Activated CD4-positive, alpha-beta T cell treated with anti-CD3 and anti-CD28 coated beads for 36 hours (primary cell): ENCODE measurements at regions of chr7 and their contacts with region 1.

Region 1: DNA sequence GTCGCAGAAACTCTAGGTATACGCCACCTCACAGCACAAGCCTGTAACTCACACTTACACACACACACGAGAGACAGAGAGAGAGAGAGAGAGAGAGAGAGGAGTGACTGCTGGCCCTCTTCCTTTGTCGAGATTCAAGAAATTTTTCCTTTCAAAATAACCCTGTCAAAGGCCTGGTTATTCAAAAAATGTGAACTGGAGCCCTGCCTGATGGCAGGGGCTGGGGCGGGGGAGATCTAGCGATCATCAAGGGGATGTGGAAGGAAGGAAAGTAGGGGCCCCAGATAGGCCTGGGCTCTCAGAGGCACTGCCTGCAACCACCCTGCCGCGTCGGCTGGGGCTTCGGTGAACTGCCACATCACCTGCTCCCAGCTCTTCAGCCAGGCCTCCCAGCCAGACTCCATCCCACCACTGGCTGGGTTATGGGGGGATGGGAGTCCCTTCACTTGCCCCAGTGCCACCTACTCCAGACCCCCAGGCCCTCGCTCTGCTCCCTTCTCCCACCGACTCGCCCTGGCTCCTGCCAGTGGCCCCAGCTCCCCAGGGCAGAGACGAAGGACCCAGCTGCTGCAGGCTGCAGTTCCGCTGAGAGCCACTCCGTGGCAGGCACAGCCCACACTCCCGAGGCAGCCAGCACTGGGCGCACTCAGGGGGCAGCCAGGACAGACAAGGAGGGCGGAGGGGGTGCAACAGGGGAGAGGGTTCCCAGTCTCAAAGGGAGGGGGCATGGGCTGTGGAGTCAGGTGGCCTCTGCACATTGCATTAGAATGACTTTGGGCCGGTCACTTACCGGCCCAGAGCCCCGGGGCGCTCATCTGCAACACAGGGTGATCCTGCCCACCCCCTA is 15.3 kb downstream of the KCNH2 start:
- DNase-seq: peak; percentile 78
- ATAC-seq: peak; percentile 93
- H3K4me3 Mint-ChIP-seq: no peak overlapping the region
- H3K27ac Mint-ChIP-seq: no peak overlapping the region
- H3K4me1 Mint-ChIP-seq: peaks cover 18% of the 10 kb centered on the region
- H3K27me3 Mint-ChIP-seq: peaks cover 21% of the 10 kb centered on the region

Region 2: DNA sequence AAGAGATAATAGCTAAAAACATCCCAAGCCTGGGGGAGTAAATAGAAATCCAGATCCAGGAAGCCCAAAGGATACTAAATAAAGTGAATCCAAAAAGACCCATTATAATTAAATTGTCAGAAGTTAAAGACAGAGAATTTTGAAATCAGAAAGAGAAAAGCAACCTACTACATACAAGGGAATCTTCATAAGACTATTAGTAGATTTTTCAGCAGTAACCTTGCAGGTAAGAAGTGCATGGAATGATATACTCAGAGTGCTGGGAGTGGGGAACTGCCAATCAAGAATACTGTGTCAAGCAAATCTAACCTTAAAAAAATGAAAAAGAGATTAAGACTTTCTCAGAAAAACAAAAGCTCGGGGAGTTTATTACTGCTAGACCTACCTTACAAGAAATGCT is 259.6 kb before region 1 on chr7:
- CTCF ChIA-PET with region 1: no interaction called
- POLR2A ChIA-PET with region 1: no interaction called
- intact Hi-C with region 1: no loop called
- DNase-seq: no peak
- ATAC-seq: no peak
- H3K4me3 Mint-ChIP-seq: no peak overlapping the region
- H3K27ac Mint-ChIP-seq: no peak overlapping the region
- H3K4me1 Mint-ChIP-seq: peaks cover 2% of the 10 kb centered on the region
- H3K27me3 Mint-ChIP-seq: no peaks in the 10 kb centered on the region

Region 3: DNA sequence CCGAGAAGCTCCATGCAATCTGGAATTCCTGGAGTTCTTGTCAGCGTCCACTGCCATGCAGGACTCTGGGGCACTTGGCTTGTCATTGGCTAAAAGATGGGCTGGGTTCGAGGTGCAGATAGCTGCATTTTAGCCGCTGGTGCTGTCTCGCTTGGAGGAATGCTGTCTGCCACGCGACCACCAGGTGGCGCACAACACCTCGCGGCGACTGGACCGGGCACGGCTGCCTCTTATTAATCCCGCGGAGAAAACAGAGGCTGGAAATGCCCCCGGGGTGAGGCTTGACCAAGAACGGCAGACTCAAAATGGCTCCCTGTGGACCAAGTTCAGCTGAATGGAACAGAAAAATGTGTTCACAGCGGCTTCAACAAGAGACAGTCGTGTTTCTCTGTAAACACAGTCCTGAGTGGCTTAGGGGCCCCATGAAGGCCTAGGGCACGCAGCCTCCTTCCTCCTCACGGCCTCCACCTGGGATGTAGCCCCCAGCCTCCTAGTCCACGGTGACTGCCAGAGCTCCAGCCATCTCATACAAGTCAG is 64.2 kb before region 1 on chr7:
- CTCF ChIA-PET with region 1: interaction called, 16 read pairs
- POLR2A ChIA-PET with region 1: no interaction called
- intact Hi-C with region 1: no loop called
- DNase-seq: peak; percentile 89
- ATAC-seq: peak; percentile 86
- H3K4me3 Mint-ChIP-seq: no peak overlapping the region
- H3K27ac Mint-ChIP-seq: peak overlapping the region; percentile 15
- H3K4me1 Mint-ChIP-seq: peaks cover 12% of the 10 kb centered on the region
- H3K27me3 Mint-ChIP-seq: peaks cover 31% of the 10 kb centered on the region

Region 4: GRCh38 chr7:150994141-150994964 is 31.6 kb after region 1 on chr7:
- CTCF ChIA-PET with region 1: interaction called, 17 read pairs
- POLR2A ChIA-PET with region 1: no interaction called
- intact Hi-C with region 1: no loop called
- DNase-seq: peak; percentile 58
- ATAC-seq: peak; percentile 70
- H3K4me3 Mint-ChIP-seq: peak overlapping the region; percentile 49
- H3K27ac Mint-ChIP-seq: no peak overlapping the region
- H3K4me1 Mint-ChIP-seq: peaks cover 40% of the 10 kb centered on the region
- H3K27me3 Mint-ChIP-seq: no peaks in the 10 kb centered on the region

Region 5: DNA sequence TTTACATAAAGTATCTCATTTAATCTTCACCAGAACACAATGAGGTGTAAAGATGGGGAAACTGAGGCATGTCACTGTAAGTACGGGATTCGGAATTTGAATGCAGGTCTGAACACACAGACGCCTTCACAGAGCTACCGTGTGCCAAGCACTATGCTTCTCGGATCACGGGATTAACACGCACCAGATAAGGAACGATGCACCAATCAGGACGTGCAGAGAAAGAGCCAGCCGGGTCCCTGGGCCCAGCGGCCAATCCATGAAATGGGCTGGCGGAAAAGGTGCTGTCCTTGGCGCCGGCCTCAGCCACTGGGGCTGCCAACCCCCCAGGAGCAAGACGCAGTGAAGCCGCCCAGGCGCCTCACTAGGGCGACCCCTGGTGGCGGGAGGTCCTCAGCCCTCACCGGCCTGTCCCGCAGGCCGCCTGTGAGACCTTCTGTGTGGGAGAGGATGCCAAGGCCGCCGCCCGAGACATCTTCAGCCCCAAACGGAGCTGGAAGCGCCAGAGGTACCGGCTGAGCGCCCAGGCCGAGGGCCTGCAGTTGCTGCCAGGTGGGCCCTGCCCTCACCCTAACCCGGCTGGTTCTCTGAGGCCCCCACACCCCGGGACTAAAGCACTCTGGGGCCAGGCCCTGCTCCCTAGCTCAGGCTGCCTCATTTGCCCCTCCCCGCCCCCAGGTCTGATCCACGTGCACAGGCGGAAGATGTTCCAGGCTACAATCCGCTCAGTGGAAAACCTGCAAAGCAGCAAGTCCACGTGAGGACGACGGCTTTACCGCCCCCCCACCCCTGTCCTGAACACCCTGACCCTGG is 45.9 kb after region 1 on chr7:
- CTCF ChIA-PET with region 1: interaction called, 11 read pairs
- POLR2A ChIA-PET with region 1: no interaction called
- intact Hi-C with region 1: no loop called
- DNase-seq: peak; percentile 89
- ATAC-seq: peak; percentile 67
- H3K4me3 Mint-ChIP-seq: peak overlapping the region; percentile 55
- H3K27ac Mint-ChIP-seq: peak overlapping the region; percentile 59
- H3K4me1 Mint-ChIP-seq: peaks cover 53% of the 10 kb centered on the region
- H3K27me3 Mint-ChIP-seq: no peaks in the 10 kb centered on the region

Region 6: DNA sequence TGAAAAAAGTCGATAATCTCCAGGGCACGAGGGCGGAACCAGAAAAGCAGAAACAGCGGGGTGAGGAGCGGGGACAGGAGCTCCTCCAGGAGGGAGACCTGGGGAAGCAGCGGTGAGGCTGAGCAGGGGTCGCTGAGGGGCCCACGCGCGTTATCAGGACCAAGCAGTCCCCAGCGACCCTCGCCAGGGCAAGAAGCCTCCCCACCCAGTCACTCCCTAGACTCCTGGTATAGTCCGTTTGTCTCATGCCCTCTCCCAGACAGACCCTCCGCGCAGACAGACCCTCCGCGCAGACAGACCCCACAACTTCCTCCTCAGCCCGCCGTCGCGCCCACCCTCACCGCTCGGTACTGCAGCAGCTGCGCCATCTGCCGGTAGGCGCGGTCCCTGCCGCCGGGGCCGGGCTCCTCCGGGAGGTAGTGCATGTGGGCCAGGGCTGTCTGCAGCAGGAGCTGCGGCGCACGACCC is 55.2 kb after region 1 on chr7:
- CTCF ChIA-PET with region 1: interaction called, 8 read pairs
- POLR2A ChIA-PET with region 1: no interaction called
- intact Hi-C with region 1: loop called (anchors 1 to 2 kb)
- DNase-seq: peak; percentile 90
- ATAC-seq: peak; percentile 59
- H3K4me3 Mint-ChIP-seq: peak overlapping the region; percentile 66
- H3K27ac Mint-ChIP-seq: peak overlapping the region; percentile 80
- H3K4me1 Mint-ChIP-seq: peaks cover 47% of the 10 kb centered on the region
- H3K27me3 Mint-ChIP-seq: peaks cover 9% of the 10 kb centered on the region

Region 7: DNA sequence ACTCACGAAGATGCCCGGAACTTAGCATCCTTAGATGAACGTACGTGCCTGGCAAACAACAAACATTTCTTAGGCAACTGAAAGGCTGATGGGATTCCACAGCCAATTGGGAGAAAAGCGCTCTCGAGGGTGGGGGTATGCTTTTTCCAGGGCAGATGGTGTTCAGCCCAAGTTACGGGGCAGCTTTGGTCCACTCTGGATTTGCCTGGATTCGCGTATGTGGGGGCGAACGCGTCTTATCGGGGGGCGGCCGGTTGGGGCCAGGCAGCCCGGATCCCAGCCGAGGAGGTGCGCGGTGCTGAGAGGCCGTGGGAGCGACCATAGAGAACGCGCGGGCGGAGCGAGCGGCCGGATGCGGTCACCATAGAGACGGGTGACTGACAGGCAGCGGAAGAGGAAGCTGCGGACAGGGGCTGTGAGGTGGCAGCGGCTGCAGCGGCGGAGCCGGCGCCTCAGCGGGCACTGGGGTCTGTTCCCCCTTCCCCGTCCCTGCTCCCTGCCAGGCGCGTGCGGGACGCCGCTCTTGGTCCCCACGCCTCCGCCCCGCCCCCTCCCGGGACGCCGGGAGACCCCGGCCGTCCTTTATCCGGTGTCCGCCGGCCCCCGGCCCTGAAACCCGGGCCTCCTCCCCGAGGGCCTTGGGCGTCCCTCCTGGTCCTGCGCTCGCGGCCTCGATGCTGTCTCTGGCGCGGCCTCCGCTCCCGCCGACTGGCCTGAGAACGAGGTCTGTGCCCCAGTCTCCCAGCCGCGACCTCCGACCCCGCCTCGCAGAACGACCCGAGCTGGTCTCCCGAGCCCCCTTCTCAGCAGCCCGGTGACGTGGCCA is 269.5 kb after region 1 on chr7 and contains the start of gene CHPF2:
- CTCF ChIA-PET with region 1: no interaction called
- POLR2A ChIA-PET with region 1: no interaction called
- intact Hi-C with region 1: no loop called
- DNase-seq: peak; percentile 95
- ATAC-seq: peak; percentile 90
- H3K4me3 Mint-ChIP-seq: peak within 1 kb of the TSS; percentile 98
- H3K27ac Mint-ChIP-seq: peak within 1 kb of the TSS; percentile 99
- H3K4me1 Mint-ChIP-seq: peaks cover 34% of the 10 kb centered on the region
- H3K27me3 Mint-ChIP-seq: no peaks in the 10 kb centered on the region
- total RNA-seq, gene CHPF2: 20.7 to 27.3 TPM